Sciatic nerve (tissue), 2 donors: ENCODE measurements at regions of chr10 and their contacts with region 1.

Region 1: DNA sequence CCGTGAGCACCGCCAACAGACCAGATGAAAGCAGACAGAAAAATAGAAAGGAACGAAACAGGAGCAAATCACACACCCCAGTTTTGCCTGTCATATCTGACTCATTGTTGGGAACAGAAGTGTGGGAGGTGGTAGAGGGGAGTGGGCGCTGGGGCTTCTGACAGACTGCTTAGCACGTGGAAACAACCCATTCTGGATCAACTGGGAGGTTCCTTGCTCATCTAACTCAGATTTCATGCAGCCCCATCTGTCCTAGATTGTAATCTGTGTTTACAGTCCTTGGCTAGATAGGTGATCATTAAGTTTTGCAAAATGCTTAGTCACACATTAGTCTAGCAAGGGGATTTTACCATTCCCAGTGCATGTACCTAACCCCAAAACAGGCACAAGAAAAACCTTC is 154.1 kb downstream of the NRP1 start:
- DNase-seq: no peak
- ATAC-seq: no peak

Region 2: DNA sequence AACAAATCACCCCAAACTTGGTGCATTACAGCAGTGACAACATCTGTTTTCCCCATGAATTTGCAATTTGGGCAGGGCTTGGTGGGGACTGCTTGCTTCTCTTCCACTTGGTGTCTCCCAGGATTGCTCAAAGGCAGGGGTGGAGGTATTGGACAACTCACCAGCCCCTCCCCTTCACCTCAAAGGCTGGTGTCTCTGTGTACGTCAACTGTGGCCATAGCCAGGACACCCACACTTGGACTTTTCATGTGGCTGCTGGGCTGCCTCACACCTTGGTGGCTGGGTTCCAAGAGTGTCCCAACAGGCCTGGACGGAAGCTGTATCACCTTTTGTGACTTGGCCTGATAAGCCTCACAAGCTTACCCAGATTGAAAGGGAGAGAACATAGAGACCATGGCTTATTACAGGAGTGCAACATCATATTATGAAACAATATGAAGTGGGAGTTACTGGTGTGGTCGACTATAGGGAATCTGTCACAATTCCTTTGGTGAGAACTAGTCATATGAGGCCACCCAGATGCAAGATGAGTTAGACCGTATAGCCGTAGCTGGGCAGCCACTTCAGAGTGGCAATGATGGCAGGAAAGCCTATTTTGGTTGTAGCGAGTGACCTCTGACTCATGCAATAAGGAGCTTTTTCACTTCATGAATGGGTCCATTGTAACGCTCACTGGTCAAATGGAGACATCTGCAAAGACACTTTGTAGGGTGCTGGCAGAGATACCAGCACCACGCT is 34.8 kb before region 1 on chr10:
- intact Hi-C with region 1: no loop called
- DNase-seq: no peak
- ATAC-seq: no peak

Region 3: GRCh38 chr10:33237736-33238624 is 57.6 kb after region 1 on chr10:
- intact Hi-C with region 1: no loop called
- DNase-seq: no peak
- ATAC-seq: peak; percentile 43

Region 4: GRCh38 chr10:33837736-33838135 is 657.3 kb after region 1 on chr10:
- intact Hi-C with region 1: loop called (anchors 5 kb)
- DNase-seq: no peak
- ATAC-seq: no peak